Left colon (tissue), 2 donors: ENCODE measurements at regions of chr7 and their contacts with region 1.

Region 1: DNA sequence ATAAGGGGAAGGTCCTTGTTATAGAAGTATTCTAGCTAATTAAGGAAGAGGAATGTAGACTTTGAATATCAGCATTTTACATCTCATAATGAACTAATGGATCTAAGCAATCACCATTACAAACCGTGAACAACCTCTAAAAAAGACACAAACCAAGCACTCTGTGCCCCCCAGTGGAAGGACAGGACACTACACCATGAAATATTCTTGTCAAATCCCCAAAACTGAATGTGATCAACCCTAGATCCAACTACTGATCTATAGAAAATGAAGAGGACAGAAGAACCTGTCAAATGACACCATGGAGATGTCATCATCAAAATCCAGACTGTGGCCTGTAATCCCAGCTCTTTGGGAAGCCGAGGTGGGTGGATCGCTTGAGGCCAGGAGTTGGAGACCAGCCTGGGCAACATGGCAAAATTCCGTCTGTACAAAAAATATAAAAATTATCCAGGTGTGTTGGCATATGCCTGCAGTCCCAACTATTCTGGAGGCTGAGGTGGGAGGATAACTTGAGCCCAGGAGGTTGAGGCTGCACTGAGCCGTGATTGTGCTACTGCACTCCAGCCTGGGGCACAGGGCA is 111.3 kb upstream of the CARD11 start:
- DNase-seq: peak in 1 of 2 donors; percentile 40
- ATAC-seq: peak; percentile 52

Region 2: DNA sequence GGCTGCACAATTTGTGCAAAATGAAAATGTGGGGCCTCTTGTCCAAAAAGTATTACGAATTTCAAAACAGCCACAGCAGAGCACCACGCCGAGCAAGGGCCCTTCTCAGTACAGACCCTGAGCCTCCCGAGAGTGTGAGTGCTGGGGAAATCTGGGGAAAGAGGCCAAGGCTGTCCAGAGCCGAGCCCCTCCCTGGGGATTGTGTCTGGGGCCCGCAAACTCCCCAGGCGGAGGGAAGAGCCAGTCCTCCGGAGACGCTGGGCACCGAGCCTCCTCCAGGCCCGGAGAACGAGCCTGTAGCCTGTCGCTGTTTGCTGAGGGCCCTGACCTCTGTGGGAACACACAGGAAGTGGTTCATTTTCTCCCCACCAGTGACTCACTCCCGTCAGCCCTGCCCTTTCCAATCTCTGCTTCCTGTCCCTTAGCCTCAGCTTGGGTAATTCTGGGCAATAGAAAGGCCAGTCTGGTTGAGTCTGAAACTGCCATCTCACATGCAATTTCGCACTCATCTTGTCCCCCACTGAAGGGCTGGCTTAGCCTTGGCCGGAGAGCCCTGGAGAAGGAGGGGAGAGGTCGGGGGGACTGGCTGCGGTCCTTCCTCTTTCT is 291.4 kb before region 1 on chr7:
- intact Hi-C with region 1: loop called in 1 of 2 experiments (anchors 10 kb)
- DNase-seq: peak; percentile 60 to 76
- ATAC-seq: peak; percentile 94